Endothelial cell of umbilical vein (primary cell): ENCODE measurements at regions of chr18 and their contacts with region 1.

Region 1: DNA sequence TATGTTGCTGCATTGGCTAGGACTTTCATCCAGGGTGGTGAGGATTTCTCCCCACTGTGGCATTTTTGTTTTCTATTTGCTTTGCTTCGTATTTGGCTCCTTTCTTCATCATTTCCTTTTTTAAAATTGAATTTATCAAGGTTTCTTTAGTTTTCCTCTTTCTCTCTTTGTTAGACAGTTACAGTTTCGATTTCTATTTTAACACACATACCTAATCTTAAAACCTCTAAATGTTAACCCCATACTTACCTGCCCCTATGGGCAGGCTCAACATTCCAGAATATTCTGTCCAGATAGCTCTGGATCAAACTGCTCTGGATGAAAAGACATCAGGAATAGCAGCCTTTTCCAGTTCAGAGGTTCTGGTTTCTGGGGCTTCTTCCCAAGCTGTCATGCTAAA is 49.2 kb downstream of the DIPK1C start:
- DNase-seq: no peak
- H3K4me3 ChIP-seq: no peak overlapping the region
- H3K27ac ChIP-seq: no peak overlapping the region
- H3K4me1 ChIP-seq: no peaks in the 10 kb centered on the region
- H3K27me3 ChIP-seq: no peaks in the 10 kb centered on the region
- CTCF ChIP-seq: no peak
- POLR2A ChIP-seq: no peak

Region 2: DNA sequence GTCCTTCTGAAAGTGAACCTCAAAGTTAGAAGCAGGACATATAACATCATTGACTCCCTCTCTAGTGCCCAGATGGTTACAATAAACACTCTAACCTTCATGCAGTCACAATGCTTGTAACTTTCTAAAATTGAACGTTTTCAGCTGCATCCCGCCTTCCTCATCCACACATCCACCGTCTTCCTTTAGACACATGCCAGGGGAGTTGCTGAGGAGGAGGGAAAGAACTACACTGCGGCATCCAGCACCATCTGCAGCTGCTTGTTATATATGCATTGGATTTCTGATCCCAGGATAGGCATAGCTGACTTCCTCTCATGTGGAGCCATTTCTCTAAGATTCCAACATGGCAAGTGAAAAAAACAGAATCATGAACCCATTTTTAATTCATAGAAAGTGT is 357.1 kb before region 1 on chr18:
- CTCF ChIA-PET with region 1: no interaction called
- POLR2A ChIA-PET with region 1: no interaction called
- dilution Hi-C with region 1: no loop called
- intact Hi-C with region 1: no loop called
- DNase-seq: no peak
- H3K4me3 ChIP-seq: no peak overlapping the region
- H3K27ac ChIP-seq: no peak overlapping the region
- H3K4me1 ChIP-seq: no peaks in the 10 kb centered on the region
- H3K27me3 ChIP-seq: no peaks in the 10 kb centered on the region
- CTCF ChIP-seq: no peak
- POLR2A ChIP-seq: no peak

Region 3: GRCh38 chr18:74459889-74460288 is 52.0 kb after region 1 on chr18:
- CTCF ChIA-PET with region 1: no interaction called
- POLR2A ChIA-PET with region 1: no interaction called
- dilution Hi-C with region 1: no loop called
- intact Hi-C with region 1: loop called (anchors 10 kb)
- DNase-seq: no peak
- H3K4me3 ChIP-seq: no peak overlapping the region
- H3K27ac ChIP-seq: no peak overlapping the region
- H3K4me1 ChIP-seq: no peaks in the 10 kb centered on the region
- H3K27me3 ChIP-seq: peaks cover 32 to 48% of the 10 kb centered on the region in 2 experiments
- CTCF ChIP-seq: peak; percentile 10 to 22
- POLR2A ChIP-seq: no peak